Heart left ventricle (tissue), 16 donors: ENCODE measurements at regions of chr21 and their contacts with region 1.

Region 1: DNA sequence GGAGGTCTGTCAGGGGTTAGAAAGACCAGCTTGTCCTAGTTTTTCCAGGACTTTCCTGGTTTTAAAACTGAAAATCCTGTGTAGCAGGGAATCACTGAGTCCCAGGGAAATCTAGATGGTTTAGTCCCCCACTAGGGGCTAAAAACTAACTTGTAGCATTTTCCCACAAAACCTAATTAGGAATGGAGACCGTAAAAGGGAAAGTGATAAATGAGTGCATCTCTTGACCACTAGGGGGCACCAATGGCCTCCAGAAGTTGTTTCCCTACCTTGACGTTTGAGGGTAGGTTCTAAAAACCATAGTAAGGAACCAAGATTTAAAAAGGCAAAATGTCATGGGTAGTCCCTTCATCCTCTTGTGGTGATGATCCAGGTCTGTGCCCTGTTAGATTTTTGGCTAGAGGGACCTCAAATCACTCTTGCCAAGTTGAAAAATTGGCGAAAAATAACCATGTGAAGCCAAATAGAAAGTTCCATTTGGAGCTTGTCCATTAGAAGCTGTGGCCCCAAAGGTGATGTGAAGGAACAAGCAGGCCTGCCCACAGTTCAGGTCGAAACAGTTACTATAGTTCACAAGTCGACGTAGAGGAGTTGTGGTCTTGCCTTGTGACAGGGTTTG is 24.5 kb downstream of the CLIC6 start:
- DNase-seq: peak in 1 of 5 donors; percentile 45
- ATAC-seq: peak in 1 of 4 donors; percentile 25
- H3K4me3 ChIP-seq: no peak overlapping the region
- H3K27ac ChIP-seq: no peak overlapping the region
- H3K4me1 ChIP-seq: peaks cover 0 to 15% (median 0%) of the 10 kb centered on the region in 12 donors
- H3K27me3 ChIP-seq: no peaks in the 10 kb centered on the region
- CTCF ChIP-seq: peak; percentile 58 to 86 (median 78)
- POLR2A ChIP-seq: no peak

Region 2: GRCh38 chr21:34754690-34755647 is 61.7 kb after region 1 on chr21:
- intact Hi-C with region 1: loop called in 1 of 10 experiments (anchors 10 kb)
- DNase-seq: no peak
- ATAC-seq: no peak
- H3K4me3 ChIP-seq: no peak overlapping the region
- H3K27ac ChIP-seq: no peak overlapping the region
- H3K4me1 ChIP-seq: no peaks in the 10 kb centered on the region
- H3K27me3 ChIP-seq: no peaks in the 10 kb centered on the region
- CTCF ChIP-seq: no peak
- POLR2A ChIP-seq: no peak

Region 3: DNA sequence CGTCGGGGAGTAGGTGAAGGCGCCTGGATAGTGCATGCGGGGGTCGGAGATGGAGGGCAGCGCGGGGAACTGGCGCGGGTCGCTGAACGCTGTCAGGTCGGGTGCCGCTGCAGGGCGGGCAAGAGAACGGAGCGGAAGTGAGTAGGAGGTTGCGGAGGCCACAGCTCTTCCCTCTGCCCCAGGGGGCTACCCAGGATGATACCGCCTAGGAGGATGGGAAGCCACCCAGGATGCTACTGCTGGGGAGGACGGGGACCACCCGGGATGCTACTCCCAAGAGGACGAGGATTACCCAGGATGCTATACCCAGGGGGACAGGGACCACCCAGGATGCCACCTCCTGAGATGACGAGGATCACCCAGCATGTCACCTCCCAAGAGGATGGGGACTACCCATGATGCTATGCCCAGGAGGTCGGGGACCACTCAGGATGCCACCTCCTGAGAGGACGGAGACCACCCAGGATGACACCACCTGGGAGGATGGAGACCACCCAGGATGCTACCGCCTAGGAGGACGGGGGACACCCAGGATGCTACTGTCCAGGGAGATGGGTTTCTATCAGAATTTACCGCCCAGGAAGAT is 99.3 kb after region 1 on chr21:
- intact Hi-C with region 1: no loop called
- DNase-seq: no peak
- ATAC-seq: peak in 1 of 4 donors; percentile 13
- H3K4me3 ChIP-seq: no peak overlapping the region
- H3K27ac ChIP-seq: no peak overlapping the region
- H3K4me1 ChIP-seq: peaks cover 0 to 16% (median 2%) of the 10 kb centered on the region in 12 donors
- H3K27me3 ChIP-seq: peaks cover 0 to 4% (median 0%) of the 10 kb centered on the region in 9 donors
- CTCF ChIP-seq: no peak
- POLR2A ChIP-seq: no peak

Region 4: GRCh38 chr21:35840197-35840799 is 1147.0 kb after region 1 on chr21:
- intact Hi-C with region 1: loop called in 2 of 10 experiments (anchors 2 to 5 kb)
- DNase-seq: peak in 4 of 5 donors; percentile 48 to 64 (median 56)
- ATAC-seq: peak in 3 of 4 donors; percentile 51 to 62 (median 58)
- H3K4me3 ChIP-seq: no peak overlapping the region
- H3K27ac ChIP-seq: no peak overlapping the region
- H3K4me1 ChIP-seq: peaks cover 0 to 7% (median 0%) of the 10 kb centered on the region in 12 donors
- H3K27me3 ChIP-seq: no peaks in the 10 kb centered on the region
- CTCF ChIP-seq: peak; percentile 62 to 87 (median 82)
- POLR2A ChIP-seq: no peak

Region 5: GRCh38 chr21:36028127-36029069 is 1335.1 kb after region 1 on chr21:
- intact Hi-C with region 1: loop called in 4 of 10 experiments (anchors 2 to 5 kb)
- DNase-seq: peak; percentile 58 to 78 (median 70)
- ATAC-seq: peak; percentile 75 to 90 (median 85)
- H3K4me3 ChIP-seq: no peak overlapping the region
- H3K27ac ChIP-seq: no peak overlapping the region
- H3K4me1 ChIP-seq: peaks cover 0 to 4% (median 0%) of the 10 kb centered on the region in 12 donors
- H3K27me3 ChIP-seq: no peaks in the 10 kb centered on the region
- CTCF ChIP-seq: peak; percentile 87 to 98 (median 94)
- POLR2A ChIP-seq: no peak

Region 6: DNA sequence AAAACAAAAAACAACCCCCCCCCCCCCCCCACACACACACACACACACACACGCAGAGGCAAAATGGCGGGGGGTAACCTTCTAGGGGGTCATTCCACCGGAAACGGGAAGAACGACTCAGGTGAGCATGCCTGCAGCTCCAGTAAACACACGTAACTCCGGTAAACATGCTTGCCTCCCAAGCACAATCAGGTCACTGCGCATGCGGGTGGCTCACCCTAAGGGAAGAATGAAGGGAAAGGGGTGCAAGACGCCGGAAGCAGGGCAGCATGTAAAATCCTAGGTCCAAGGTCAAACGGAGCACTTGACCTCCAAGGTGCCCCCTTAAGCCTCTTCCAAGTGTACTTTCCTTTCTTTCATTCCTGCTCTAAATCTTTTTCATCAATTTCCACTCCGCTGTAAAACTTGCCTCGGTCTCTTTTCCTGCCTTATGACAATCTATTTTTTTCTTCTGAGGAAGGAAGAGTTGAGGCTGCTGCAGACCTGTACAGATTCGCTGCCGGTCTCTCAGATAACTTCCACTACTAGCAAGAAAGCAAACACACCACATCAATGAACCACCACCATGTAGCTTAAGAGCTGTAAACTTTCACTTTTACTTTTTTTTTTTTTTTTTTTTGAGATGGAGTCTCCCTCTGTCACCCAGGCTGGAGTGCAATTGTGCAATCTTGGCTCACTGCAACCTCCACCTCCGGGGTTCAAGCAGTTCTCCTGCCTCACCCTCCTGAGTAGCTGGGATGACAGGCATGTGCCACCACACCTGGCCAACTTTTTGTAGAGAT is 1420.5 kb after region 1 on chr21:
- intact Hi-C with region 1: loop called in 1 of 10 experiments (anchors 5 kb)
- DNase-seq: no peak
- ATAC-seq: peak in 1 of 4 donors; percentile 22
- H3K4me3 ChIP-seq: peak overlapping the region in 1 of 12 donors; percentile 60
- H3K27ac ChIP-seq: peak overlapping the region in 1 of 12 donors; percentile 57
- H3K4me1 ChIP-seq: peaks cover 0 to 8% (median 1%) of the 10 kb centered on the region in 12 donors
- H3K27me3 ChIP-seq: no peaks in the 10 kb centered on the region
- CTCF ChIP-seq: no peak
- POLR2A ChIP-seq: no peak